Activated T-helper 1 cell treated with anti-CD3 and anti-CD28 coated beads, Interleukin-12 subunit alpha, Interleukin-12 subunit beta, Interleukin-2, Interleukin-4 antibody, amounts not matched to agents 30 ng/mL and 10 ng/mL and 1 ng/mL, durations not matched to agents 14 hours and 24 hours and 36 hours (primary cell): ENCODE measurements at regions of chr5 and their contacts with region 1.

Region 1: DNA sequence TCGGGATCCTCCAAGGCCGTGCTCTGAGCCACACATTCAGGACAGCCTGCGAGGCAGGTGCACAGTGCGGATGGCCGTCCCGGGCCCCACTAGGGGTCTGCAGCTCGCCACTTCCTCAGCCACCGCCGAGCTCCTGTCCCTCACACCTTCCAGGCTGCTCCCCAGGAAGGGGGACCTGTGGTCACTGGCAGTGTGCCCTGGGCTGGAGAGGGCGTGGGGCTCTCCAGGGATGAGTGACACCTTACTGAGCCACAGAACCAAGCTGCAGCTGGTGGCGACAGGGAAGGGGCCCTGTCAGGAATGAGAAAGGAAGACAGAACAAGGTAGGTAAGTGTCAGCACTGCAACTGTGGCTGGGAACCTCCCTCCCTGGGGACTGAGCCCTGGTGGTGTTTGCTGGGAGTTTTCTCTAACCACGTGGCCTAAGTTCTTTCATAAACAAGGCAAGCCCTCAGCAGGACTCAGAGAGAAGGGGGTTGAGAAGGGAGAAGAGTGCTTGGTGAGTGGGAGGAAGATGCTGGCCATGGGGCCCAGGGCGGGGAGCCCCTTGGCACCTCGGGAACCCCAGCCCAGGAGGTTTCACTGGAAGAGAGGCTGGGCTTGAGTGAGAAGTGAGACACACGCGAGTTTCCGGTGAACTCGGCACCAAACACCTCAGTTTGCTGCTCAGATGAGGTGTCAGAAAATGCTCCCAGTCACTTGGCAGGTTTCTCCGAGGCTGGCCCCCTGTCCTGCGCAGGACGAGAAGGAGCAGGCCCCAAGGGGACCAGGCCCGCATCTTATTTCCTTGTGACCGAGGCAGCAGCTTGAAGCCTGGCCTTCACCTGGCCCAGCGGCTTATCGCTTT is 5.2 kb downstream of the IL13 start:
- DNase-seq: peak; percentile 43
- H3K4me3 Mint-ChIP-seq: peak overlapping the region; percentile 60
- H3K27ac Mint-ChIP-seq: peak overlapping the region; percentile 94
- H3K4me1 Mint-ChIP-seq: peaks cover 84% of the 10 kb centered on the region
- H3K27me3 Mint-ChIP-seq: no peaks in the 10 kb centered on the region

Region 2: GRCh38 chr5:132344775-132345524 is 318.2 kb before region 1 on chr5:
- intact Hi-C with region 1: no loop called
- DNase-seq: no peak
- H3K4me3 Mint-ChIP-seq: no peak overlapping the region
- H3K27ac Mint-ChIP-seq: no peak overlapping the region
- H3K4me1 Mint-ChIP-seq: no peaks in the 10 kb centered on the region
- H3K27me3 Mint-ChIP-seq: peaks cover 5% of the 10 kb centered on the region

Region 3: DNA sequence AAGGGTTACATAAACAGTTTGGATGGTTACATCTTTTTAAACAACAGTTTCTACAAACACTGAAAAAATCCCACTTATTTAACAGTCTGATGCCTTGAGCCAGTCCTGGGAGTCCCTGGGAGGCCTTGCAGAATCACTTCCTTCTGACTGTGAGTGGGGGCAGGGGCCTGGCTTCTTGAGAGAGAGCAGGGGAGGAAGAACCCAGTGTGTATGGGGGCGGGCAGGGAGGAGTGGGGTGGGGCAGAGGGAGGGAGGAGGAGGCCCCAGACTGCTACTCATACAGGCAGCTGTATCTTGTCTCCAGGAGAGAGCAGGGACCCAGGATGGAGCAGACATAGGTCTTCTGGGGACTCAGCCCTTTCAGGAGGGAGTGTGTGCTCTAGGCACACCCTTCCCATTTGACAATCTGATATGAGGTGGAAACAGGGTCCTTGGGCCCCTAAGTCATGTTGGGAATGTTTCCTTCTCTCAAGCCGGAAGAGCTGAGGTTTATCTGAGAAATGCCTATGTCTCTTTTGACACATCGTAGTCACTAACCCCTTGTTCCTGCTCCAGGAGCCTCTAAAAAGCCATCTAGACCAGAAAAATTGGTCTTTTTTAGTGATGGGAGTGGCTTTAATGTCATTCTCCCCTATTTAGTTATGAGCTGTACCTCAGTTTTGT is 225.4 kb before region 1 on chr5:
- intact Hi-C with region 1: no loop called
- DNase-seq: peak; percentile 47
- H3K4me3 Mint-ChIP-seq: peak overlapping the region; percentile 67
- H3K27ac Mint-ChIP-seq: peak overlapping the region; percentile 92
- H3K4me1 Mint-ChIP-seq: peaks cover 87% of the 10 kb centered on the region
- H3K27me3 Mint-ChIP-seq: no peaks in the 10 kb centered on the region

Region 4: DNA sequence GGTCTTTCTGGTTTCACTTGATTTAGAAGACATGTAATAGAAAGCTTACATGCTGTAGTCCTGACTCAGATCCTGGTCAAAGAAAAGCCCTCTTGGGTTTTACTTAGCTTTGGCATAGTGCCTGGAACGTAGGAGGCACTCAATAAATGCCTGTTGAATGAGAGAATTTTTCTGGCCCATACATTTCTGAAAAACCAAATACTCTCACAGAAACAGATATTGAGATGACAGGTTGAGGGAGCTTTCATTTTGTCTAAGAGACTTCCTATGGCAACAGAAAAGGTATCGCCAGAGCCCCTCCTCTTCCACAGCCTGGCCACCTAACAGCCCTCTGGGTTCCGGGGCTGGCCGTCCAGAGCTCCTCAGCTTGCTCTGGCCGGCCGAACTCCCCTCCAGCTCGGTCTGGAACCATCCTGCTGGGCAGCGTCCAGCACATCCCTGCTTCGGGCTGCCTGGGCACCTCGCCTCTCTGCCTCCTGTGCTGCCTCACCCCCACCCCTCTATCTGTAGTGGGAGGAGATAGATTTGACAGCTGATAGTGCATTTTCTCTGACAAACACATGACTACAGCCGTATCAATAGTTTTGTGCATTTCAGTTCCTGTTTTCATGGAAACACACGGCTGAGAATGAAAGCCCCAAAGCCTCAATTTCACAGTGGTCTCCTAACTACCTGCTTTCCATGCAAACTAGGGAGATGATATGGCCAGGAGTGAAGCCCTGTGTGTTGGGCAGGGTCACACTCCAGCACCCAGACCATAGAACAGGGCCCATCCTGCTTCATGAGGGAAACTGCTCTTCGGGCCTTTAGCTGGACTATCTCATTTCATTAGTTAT is 11.7 kb after region 1 on chr5:
- intact Hi-C with region 1: loop called (anchors 1 kb)
- DNase-seq: no peak
- H3K4me3 Mint-ChIP-seq: peak overlapping the region; percentile 63
- H3K27ac Mint-ChIP-seq: peak overlapping the region; percentile 88
- H3K4me1 Mint-ChIP-seq: peaks cover 41% of the 10 kb centered on the region
- H3K27me3 Mint-ChIP-seq: no peaks in the 10 kb centered on the region

Region 5: DNA sequence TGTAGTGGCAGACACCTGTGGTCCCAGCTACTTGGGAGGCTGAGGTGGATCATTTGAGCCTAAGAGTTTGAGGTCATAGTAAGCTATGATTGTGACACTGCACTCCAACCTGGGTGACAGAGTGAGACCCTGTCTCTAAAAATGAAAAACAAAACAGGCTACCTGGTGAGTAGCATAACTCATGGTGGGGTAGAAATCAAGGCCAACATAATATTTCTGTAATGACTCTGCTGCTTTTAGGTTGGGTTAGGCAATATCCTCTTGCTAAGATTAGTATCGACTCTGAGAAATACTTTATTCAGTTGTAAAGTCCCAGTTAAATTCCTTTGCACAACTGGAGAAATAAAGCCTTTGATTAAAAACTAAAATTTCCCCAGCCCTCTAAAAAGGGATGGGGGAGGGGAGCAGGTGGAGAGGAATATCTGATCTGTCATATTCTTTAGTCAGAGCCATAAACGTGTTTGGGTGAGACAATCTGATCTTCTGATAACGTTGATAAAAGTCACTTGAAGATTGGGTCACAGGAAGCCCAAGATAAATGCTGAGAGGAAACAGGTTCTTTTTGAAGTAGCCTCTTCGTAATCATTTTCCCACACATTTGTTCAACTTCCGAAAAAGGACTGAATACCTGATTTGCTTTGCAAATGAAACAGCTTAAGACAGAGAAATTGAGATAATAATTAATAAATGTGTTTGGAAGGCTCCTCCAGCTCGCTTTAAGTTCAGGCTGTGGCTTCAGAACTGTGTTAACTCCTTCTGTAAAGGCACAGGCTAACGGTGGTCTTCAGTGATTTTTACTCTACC is 25.6 kb after region 1 on chr5:
- intact Hi-C with region 1: loop called (anchors 1 kb)
- DNase-seq: no peak
- H3K4me3 Mint-ChIP-seq: no peak overlapping the region
- H3K27ac Mint-ChIP-seq: peak overlapping the region; percentile 70
- H3K4me1 Mint-ChIP-seq: peaks cover 42% of the 10 kb centered on the region
- H3K27me3 Mint-ChIP-seq: no peaks in the 10 kb centered on the region

Region 6: DNA sequence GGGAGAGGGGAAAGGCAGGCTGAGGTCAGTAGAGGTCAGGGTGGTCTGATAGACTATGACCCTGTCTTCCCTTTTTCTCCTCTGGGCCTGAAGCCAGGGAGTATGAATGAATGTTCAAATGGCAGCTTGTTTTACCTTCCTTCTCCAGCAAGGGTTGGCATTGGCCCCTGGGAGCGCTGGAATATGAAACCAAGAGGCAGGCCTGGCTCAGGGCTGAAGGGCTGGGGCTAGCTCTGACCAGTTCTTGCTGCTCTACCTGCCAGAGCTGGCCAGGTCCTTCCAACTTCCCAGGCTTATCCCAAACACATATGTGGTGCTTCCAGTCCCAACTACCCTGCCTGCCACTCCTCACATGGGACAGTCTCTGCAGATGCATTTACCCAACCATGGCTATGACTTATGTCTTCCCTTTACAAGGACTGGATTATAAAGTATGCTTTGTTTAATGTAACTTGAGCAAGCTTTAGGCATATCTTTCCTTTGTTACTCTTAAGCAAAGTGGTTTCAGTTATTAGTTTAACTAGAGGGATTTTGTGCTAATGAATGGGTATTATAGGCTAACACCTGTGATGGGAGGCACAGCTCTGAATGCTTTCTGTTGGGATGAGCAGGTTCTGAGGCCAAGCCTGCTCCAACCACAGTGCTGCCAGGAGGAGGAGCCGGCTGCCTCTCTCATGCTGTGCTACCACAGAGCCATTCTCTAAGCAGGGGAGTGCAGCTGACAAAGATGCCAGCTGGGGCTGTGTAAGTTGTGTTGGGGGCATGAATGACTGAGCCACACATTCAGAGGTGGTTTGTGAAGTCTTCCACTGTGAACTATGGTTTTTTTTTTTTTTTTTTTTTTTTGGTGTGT is 90.2 kb after region 1 on chr5:
- intact Hi-C with region 1: loop called (anchors 2 kb)
- DNase-seq: no peak
- H3K4me3 Mint-ChIP-seq: peak overlapping the region; percentile 35
- H3K27ac Mint-ChIP-seq: peak overlapping the region; percentile 90
- H3K4me1 Mint-ChIP-seq: peaks cover 72% of the 10 kb centered on the region
- H3K27me3 Mint-ChIP-seq: peaks cover 3% of the 10 kb centered on the region